ENCODE measurements at regions of chr4 and their contacts with region 1.

Region 1: GRCh38 chr4:139603576-139604387 is 47.8 kb upstream of the SETD7 start:
- DNase-seq: peak in 3 of 5 donors; percentile 4 to 23 (median 10)
- H3K4me3 ChIP-seq: no peak overlapping the region
- H3K4me3 Mint-ChIP-seq: no peak overlapping the region
- H3K27ac ChIP-seq: no peak overlapping the region
- H3K27ac Mint-ChIP-seq: peak overlapping the region in 1 of 8 donors; percentile 5
- H3K4me1 ChIP-seq: peaks cover 4% of the 10 kb centered on the region
- H3K4me1 Mint-ChIP-seq: peaks cover 12 to 15% (median 15%) of the 10 kb centered on the region in 3 donors
- H3K27me3 ChIP-seq: no peaks in the 10 kb centered on the region
- H3K27me3 Mint-ChIP-seq: peaks cover 14 to 26% of the 10 kb centered on the region in 2 donors

Region 2: DNA sequence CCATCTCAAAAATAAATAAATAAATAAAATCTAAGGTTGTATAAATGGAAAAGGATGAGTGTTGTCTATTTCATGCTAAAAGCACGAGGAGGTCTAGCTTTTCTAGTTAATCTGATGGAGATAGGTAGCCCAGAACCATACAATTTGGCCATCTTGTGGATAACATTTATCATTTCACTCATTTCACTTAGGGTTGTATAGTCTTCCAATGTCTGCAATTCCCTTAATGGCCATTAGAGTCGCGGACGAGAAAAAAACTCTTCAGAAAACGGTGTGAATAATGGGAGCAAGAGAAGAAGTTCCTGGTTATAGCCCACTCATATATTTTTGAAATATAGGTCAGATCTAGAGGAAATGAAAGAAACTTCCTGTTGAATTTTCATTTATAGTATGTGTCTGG is 13.9 kb after region 1 on chr4:
- CTCF ChIA-PET with region 1: interaction called, 15 read pairs
- POLR2A ChIA-PET with region 1: no interaction called
- DNase-seq: no peak
- H3K4me3 ChIP-seq: no peak overlapping the region
- H3K4me3 Mint-ChIP-seq: no peak overlapping the region
- H3K27ac ChIP-seq: no peak overlapping the region
- H3K27ac Mint-ChIP-seq: no peak overlapping the region
- H3K4me1 ChIP-seq: no peaks in the 10 kb centered on the region
- H3K4me1 Mint-ChIP-seq: peaks cover 0 to 5% (median 0%) of the 10 kb centered on the region in 3 donors
- H3K27me3 ChIP-seq: no peaks in the 10 kb centered on the region
- H3K27me3 Mint-ChIP-seq: peaks cover 2 to 7% of the 10 kb centered on the region in 2 donors